ENCODE measurements at regions of chr2 and their contacts with region 1.

Region 1: GRCh38 chr2:38875576-38876367 is at the starts of genes DHX57 and MORN2:
- DNase-seq: peak; percentile 84
- H3K4me3 ChIP-seq: peak within 1 kb of the TSS; percentile 70 to 90 (median 78)
- H3K27ac ChIP-seq: peak within 1 kb of the TSS; percentile 82
- H3K4me1 ChIP-seq: peaks cover 11% of the 10 kb centered on the region
- H3K27me3 ChIP-seq: no peaks in the 10 kb centered on the region
- CTCF ChIP-seq: no peak
- total RNA-seq, gene DHX57: 21.7 to 30.8 TPM
- total RNA-seq, gene MORN2: 9.2 to 16.3 TPM

Region 2: GRCh38 chr2:38653715-38654527 is 221.9 kb before region 1 on chr2:
- CTCF ChIA-PET with region 1: no interaction called
- dilution Hi-C with region 1: no loop called
- in situ Hi-C with region 1: no loop called
- intact Hi-C with region 1: no loop called
- DNase-seq: peak; percentile 50
- H3K4me3 ChIP-seq: no peak overlapping the region
- H3K27ac ChIP-seq: no peak overlapping the region
- H3K4me1 ChIP-seq: no peaks in the 10 kb centered on the region
- H3K27me3 ChIP-seq: no peaks in the 10 kb centered on the region
- CTCF ChIP-seq: no peak

Region 3: DNA sequence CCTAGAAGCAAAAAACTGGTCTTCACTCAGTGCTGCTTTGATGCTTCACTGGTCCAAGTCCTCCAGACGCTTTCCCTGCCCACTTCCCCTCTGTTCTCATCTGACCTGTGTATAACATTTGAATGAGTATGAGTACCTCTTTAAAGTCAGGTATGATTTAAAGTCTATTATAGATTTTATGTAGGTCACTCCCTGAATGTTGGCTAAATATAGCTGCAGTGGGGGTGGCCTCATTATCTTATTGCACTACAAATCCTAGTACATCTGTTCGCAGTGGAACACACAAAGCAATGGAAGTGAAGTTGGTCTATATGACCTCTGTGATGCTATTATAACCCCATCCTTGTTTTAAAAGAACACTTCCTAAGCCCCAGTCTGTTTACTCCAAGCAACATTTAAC is 47.1 kb after region 1 on chr2:
- CTCF ChIA-PET with region 1: no interaction called
- dilution Hi-C with region 1: no loop called
- in situ Hi-C with region 1: no loop called
- intact Hi-C with region 1: no loop called
- DNase-seq: no peak
- H3K4me3 ChIP-seq: no peak overlapping the region
- H3K27ac ChIP-seq: no peak overlapping the region
- H3K4me1 ChIP-seq: no peaks in the 10 kb centered on the region
- H3K27me3 ChIP-seq: peaks cover 2% of the 10 kb centered on the region
- CTCF ChIP-seq: no peak

Region 4: GRCh38 chr2:38935568-38936172 is 59.9 kb after region 1 on chr2:
- CTCF ChIA-PET with region 1: no interaction called
- dilution Hi-C with region 1: loop called (anchors 5 kb)
- in situ Hi-C with region 1: no loop called
- intact Hi-C with region 1: no loop called
- DNase-seq: peak; percentile 68
- H3K4me3 ChIP-seq: no peak overlapping the region
- H3K27ac ChIP-seq: no peak overlapping the region
- H3K4me1 ChIP-seq: no peaks in the 10 kb centered on the region
- H3K27me3 ChIP-seq: no peaks in the 10 kb centered on the region
- CTCF ChIP-seq: no peak

Measured in mammary epithelial cell (primary cell).